ENCODE measurements at regions of chr19 and their contacts with region 1.

Region 1: GRCh38 chr19:9413240-9413954 is 22.0 kb downstream of the ZNF266 start:
- DNase-seq: no peak
- ATAC-seq: no peak
- H3K4me3 ChIP-seq: peak overlapping the region in 1 of 2 experiments; percentile 18
- H3K4me3 Mint-ChIP-seq: no peak overlapping the region
- H3K27ac ChIP-seq: no peak overlapping the region
- H3K27ac Mint-ChIP-seq: no peak overlapping the region
- H3K4me1 ChIP-seq: no peaks in the 10 kb centered on the region
- H3K4me1 Mint-ChIP-seq: no peaks in the 10 kb centered on the region
- H3K27me3 ChIP-seq: no peaks in the 10 kb centered on the region
- H3K27me3 Mint-ChIP-seq: no peaks in the 10 kb centered on the region
- CTCF ChIP-seq: no peak

Region 2: GRCh38 chr19:9342610-9343304 is 70.6 kb before region 1 on chr19:
- CTCF ChIA-PET with region 1: no interaction called
- POLR2A ChIA-PET with region 1: no interaction called
- intact Hi-C with region 1: loop called in 1 of 2 experiments (anchors 5 kb)
- DNase-seq: no peak
- ATAC-seq: no peak
- H3K4me3 ChIP-seq: peak overlapping the region in 1 of 2 experiments; percentile 11
- H3K4me3 Mint-ChIP-seq: no peak overlapping the region
- H3K27ac ChIP-seq: no peak overlapping the region
- H3K27ac Mint-ChIP-seq: no peak overlapping the region
- H3K4me1 ChIP-seq: no peaks in the 10 kb centered on the region
- H3K4me1 Mint-ChIP-seq: no peaks in the 10 kb centered on the region
- H3K27me3 ChIP-seq: no peaks in the 10 kb centered on the region
- H3K27me3 Mint-ChIP-seq: no peaks in the 10 kb centered on the region
- CTCF ChIP-seq: no peak